ENCODE measurements at regions of chr15 and their contacts with region 1.

Region 1: DNA sequence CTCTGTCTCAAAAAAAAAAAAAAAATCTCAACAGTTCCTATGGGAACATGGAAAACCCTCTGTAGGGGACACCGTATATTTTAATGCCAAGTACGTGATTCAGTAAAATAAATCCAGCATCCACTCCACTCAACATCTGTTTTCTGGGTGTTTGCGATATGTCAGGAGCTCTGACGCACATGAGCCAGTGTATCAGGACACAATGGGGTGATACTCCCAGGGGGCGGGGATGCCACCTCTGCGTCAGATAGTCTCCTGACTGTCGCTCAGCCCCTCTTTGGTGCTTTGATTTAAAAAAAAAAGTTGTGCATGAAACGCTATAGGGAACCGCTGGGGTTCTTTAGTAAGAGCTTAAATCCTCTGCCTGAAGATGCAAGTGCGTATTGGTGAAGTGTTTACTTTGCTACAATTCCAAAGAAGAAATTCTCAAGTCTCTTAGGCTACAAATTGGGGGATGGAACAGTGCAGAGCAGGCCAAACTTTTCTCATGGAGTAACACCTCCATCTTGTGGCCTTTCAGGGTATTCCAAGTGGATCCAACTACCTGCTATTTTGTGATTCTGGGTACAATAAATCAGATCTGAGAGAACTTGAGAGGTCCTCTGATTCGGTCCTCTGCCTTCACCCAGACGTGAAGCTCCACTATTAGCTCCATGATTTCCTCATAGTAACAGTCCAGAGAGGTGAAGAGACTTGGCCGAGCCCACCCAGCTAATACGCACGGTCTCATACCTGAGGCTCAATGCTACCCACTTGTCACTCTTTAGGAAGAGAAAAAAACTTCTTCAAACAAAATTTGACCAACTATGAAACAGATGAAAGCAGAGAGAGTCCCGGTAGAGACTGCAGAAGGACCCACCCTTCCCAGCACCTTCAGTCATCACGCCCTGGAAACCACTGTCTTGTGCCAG is 9.3 kb upstream of the NR2E3 start:
- DNase-seq: peak; percentile 88
- ATAC-seq: peak; percentile 83
- H3K4me3 ChIP-seq: no peak overlapping the region
- H3K27ac ChIP-seq: peak overlapping the region; percentile 75
- H3K4me1 ChIP-seq: peaks cover 18% of the 10 kb centered on the region
- H3K27me3 ChIP-seq: no peaks in the 10 kb centered on the region
- CTCF ChIP-seq: peak; percentile 88

Region 2: DNA sequence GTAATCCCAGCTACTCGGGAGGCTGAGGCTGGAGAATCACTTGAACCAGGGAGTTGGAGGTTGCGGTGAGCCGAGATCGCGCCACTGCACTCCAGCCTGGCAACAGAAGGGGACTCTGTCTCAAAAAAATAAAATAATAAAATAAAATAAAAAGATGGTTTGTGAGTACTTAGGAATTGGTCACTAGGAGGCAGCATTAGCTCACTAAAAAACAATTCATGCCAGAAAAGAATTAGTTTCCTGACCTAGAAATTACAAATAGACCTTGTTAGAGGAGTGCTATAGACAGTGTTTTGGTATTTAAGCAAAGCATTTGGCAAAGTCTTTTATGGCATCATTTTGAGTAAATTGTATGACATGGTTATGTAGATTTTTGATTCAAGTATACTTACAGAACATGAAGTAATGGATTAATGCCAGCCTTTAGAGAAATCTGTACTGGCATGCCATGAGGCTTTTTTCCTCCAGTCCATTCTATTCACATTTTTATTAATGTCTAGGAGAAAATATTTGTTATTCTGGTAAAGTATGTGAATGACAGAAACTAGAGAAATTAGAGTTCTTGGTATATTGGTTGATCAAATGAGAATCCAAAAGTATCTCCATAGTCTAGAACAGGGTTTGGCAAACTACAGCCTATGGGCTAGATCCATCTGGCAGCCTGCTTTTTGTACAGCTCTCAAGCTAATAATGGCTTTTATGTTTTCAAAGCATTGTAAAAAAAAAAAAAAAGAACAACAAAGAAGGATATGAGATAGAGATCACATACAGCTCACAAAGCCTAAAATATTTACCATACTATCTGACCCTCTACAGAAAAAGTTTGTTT is 826.9 kb before region 1 on chr15:
- CTCF ChIA-PET with region 1: no interaction called
- POLR2A ChIA-PET with region 1: no interaction called
- intact Hi-C with region 1: loop called (anchors 10 kb)
- DNase-seq: peak; percentile 72
- ATAC-seq: no peak; the same call in 1 of the 2 replicates
- H3K4me3 ChIP-seq: no peak overlapping the region
- H3K27ac ChIP-seq: no peak overlapping the region
- H3K4me1 ChIP-seq: peaks cover 7% of the 10 kb centered on the region; the same call in 1 of the 2 replicates
- H3K27me3 ChIP-seq: no peaks in the 10 kb centered on the region
- CTCF ChIP-seq: peak; percentile 49; the same call in 1 of the 2 replicates

Region 3: GRCh38 chr15:71114896-71115554 is 686.1 kb before region 1 on chr15 and contains the start of gene THSD4:
- CTCF ChIA-PET with region 1: no interaction called
- POLR2A ChIA-PET with region 1: no interaction called
- intact Hi-C with region 1: loop called (anchors 5 kb)
- DNase-seq: peak; percentile 89
- ATAC-seq: peak; percentile 69
- H3K4me3 ChIP-seq: peak within 1 kb of the TSS; percentile 81
- H3K27ac ChIP-seq: peak within 1 kb of the TSS; percentile 98
- H3K4me1 ChIP-seq: peaks cover 68% of the 10 kb centered on the region
- H3K27me3 ChIP-seq: no peaks in the 10 kb centered on the region
- CTCF ChIP-seq: peak; percentile 92
- total RNA-seq, gene THSD4: 29.0 and 39.3 TPM in 2 replicates

Region 4: GRCh38 chr15:71562251-71562650 is 238.8 kb before region 1 on chr15:
- CTCF ChIA-PET with region 1: no interaction called
- POLR2A ChIA-PET with region 1: no interaction called
- intact Hi-C with region 1: loop called (anchors 10 kb)
- DNase-seq: no peak
- ATAC-seq: peak; percentile 35
- H3K4me3 ChIP-seq: peak overlapping the region; percentile 16; the same call in 1 of the 2 replicates
- H3K27ac ChIP-seq: peak overlapping the region; percentile 82
- H3K4me1 ChIP-seq: peaks cover 40% of the 10 kb centered on the region
- H3K27me3 ChIP-seq: no peaks in the 10 kb centered on the region
- CTCF ChIP-seq: no peak

Region 5: GRCh38 chr15:71752604-71753289 is 48.3 kb before region 1 on chr15:
- CTCF ChIA-PET with region 1: interaction called, 26 read pairs
- POLR2A ChIA-PET with region 1: interaction called, 5 read pairs
- intact Hi-C with region 1: loop called (anchors 1 kb)
- DNase-seq: peak; percentile 97
- ATAC-seq: peak; percentile 76
- H3K4me3 ChIP-seq: no peak overlapping the region
- H3K27ac ChIP-seq: peak overlapping the region; percentile 88
- H3K4me1 ChIP-seq: peaks cover 42% of the 10 kb centered on the region
- H3K27me3 ChIP-seq: no peaks in the 10 kb centered on the region
- CTCF ChIP-seq: peak; percentile 85

Region 6: GRCh38 chr15:71780115-71780976 is 20.7 kb before region 1 on chr15:
- CTCF ChIA-PET with region 1: no interaction called
- POLR2A ChIA-PET with region 1: no interaction called
- intact Hi-C with region 1: loop called (anchors 1 kb)
- DNase-seq: peak; percentile 74
- ATAC-seq: peak; percentile 66
- H3K4me3 ChIP-seq: peak overlapping the region; percentile 14; the same call in 1 of the 2 replicates
- H3K27ac ChIP-seq: peak overlapping the region; percentile 61
- H3K4me1 ChIP-seq: peaks cover 34% of the 10 kb centered on the region
- H3K27me3 ChIP-seq: no peaks in the 10 kb centered on the region
- CTCF ChIP-seq: peak; percentile 87

Region 7: DNA sequence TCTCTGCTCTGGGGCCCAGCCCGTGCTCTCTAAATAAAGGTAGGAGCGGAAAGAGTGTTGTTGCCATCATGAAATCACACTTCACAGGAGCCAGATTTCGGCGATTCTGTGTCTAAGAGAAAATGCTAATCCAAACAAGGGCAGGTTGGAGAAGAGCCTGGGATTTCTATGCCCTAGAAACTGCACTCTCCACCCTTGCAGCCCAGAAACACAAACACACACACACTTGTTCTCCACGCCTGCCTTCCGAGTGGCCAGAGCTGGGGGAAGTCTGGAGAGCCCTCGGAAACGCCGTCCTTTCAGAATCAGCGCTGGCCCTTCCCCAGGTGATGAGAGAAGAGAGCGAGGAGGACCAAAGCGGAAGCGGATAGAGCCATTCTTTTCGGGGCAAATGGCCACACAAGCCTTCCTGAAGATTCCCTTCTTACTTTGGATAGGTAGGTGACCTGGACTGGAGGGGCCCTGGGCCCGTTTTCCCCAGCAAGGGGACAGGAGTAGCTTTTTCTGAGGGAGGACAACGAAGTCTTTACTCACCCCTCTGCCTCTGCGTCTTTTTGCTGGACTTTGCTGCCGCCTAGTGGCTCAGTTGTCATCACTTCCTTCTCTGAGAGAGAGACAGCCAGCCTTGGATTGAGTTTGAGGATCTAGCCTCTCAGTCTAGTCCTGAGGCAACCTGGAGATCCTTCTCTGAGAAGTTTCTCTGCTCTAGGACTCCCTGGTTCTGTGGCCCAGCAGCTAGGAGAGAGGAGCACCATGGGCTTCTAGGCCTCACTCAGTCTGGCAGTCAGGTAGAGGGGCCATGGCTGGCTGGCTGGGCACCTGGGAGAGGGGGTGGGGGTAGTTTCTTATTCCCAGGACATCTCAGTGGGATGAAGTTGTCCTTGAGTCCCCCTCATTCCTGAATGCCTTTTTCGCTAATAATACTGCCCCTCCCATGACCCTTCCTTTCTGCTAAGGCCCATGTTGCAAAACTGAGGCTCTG is 354.8 kb after region 1 on chr15:
- CTCF ChIA-PET with region 1: no interaction called
- POLR2A ChIA-PET with region 1: no interaction called
- intact Hi-C with region 1: loop called (anchors 2 kb)
- DNase-seq: peak; percentile 92
- ATAC-seq: peak; percentile 94
- H3K4me3 ChIP-seq: peak overlapping the region; percentile 73
- H3K27ac ChIP-seq: no peak overlapping the region
- H3K4me1 ChIP-seq: peaks cover 12% of the 10 kb centered on the region
- H3K27me3 ChIP-seq: no peaks in the 10 kb centered on the region
- CTCF ChIP-seq: peak; percentile 93

Measured in PC-3 (cell line).